ENCODE measurements at regions of chr17 and their contacts with region 1.

Region 1: DNA sequence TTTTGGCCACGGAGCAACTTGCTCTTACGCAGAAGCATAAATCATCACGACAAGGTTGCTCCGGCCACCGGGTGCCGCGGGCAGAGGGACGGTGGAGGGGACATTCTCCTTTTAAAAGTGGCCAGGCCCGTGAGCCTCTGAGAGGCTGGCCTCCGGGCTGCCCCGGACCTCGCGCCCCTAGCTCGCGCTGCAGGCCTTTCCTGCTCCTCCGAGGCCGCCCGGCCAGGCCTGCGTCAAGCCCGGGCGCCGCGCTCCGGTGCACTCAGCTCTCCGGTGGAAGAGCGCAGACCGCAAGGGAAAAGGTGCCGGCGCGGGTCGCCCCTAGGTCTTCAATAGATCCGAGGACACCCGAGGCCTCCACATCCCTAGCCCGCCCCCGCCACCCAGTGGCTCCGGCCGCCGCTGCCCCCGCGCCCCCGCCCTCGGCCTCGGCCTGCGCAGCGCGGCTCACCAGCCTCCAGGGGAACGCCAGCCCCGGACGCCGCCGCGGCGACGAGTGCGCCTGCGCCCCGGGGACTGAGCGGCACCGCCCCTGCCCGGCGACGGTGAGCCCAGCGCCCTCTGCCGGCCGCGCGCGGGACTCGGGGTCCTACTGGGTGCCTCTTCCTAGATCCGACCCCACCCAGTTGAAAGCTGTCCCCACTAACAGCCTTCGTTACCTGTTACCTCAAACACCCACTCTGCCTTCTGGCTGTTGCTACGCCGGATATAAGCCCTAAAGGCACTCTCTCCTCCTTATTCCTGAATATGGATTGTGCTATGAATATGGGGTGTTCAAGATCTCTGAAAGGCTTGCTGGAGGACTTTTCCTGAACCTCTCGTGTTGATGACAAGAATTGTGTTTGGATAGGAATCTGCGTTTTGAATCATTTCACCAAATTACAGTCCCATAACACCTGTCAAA is at the start of gene LYRM9:
- DNase-seq: peak; percentile 94
- ATAC-seq: peak; percentile 99
- H3K4me3 Mint-ChIP-seq: peak within 1 kb of the TSS; percentile 75
- H3K27ac Mint-ChIP-seq: no peak within 1 kb of the TSS
- H3K4me1 Mint-ChIP-seq: peaks cover 20% of the 10 kb centered on the region
- H3K27me3 Mint-ChIP-seq: peaks cover 15% of the 10 kb centered on the region
- CTCF ChIP-seq: peak; percentile 96
- total RNA-seq, gene LYRM9: 3.1 to 3.5 TPM

Region 2: GRCh38 chr17:27552469-27552779 is 340.7 kb before region 1 on chr17:
- CTCF ChIA-PET with region 1: no interaction called
- POLR2A ChIA-PET with region 1: no interaction called
- intact Hi-C with region 1: no loop called
- DNase-seq: peak; percentile 42
- ATAC-seq: peak; percentile 76
- H3K4me3 Mint-ChIP-seq: no peak overlapping the region
- H3K27ac Mint-ChIP-seq: no peak overlapping the region
- H3K4me1 Mint-ChIP-seq: peaks cover 25% of the 10 kb centered on the region
- H3K27me3 Mint-ChIP-seq: no peaks in the 10 kb centered on the region
- CTCF ChIP-seq: no peak

Region 3: GRCh38 chr17:27760069-27760885 is 132.8 kb before region 1 on chr17:
- CTCF ChIA-PET with region 1: interaction called, 11 read pairs
- POLR2A ChIA-PET with region 1: no interaction called
- intact Hi-C with region 1: no loop called
- DNase-seq: peak; percentile 82
- ATAC-seq: peak; percentile 68
- H3K4me3 Mint-ChIP-seq: no peak overlapping the region
- H3K27ac Mint-ChIP-seq: no peak overlapping the region
- H3K4me1 Mint-ChIP-seq: no peaks in the 10 kb centered on the region
- H3K27me3 Mint-ChIP-seq: no peaks in the 10 kb centered on the region
- CTCF ChIP-seq: peak; percentile 94

Region 4: GRCh38 chr17:27793168-27793905 is 99.8 kb before region 1 on chr17:
- CTCF ChIA-PET with region 1: interaction called, 14 read pairs
- POLR2A ChIA-PET with region 1: no interaction called
- intact Hi-C with region 1: no loop called
- DNase-seq: no peak
- ATAC-seq: peak; percentile 47
- H3K4me3 Mint-ChIP-seq: no peak overlapping the region
- H3K27ac Mint-ChIP-seq: no peak overlapping the region
- H3K4me1 Mint-ChIP-seq: peaks cover 4% of the 10 kb centered on the region
- H3K27me3 Mint-ChIP-seq: peaks cover 29% of the 10 kb centered on the region
- CTCF ChIP-seq: no peak

Region 5: DNA sequence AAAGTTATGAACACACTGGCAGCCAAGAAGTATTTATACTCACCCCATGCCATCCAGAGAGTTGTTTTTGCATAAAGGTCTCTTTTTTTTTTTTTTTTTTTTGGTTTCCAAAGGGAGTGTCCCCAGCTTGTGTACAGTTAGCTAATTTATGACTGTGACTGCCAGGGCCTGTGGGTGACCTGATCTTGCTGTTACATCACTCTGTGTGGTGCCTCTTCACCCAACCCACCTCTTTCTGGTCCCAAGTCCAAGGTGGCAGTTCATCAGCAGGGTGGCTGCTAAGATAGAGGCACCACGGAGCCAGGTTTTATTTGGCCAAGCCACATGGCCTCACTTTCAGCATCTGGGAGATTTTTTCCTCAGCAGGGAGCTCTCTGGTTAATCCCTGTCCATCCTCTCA is 92.6 kb before region 1 on chr17 and contains the start of gene NOS2:
- CTCF ChIA-PET with region 1: interaction called, 113 read pairs
- POLR2A ChIA-PET with region 1: interaction called, 4 read pairs
- intact Hi-C with region 1: loop called (anchors 5 kb)
- DNase-seq: no peak
- ATAC-seq: no peak
- H3K4me3 Mint-ChIP-seq: no peak within 1 kb of the TSS
- H3K27ac Mint-ChIP-seq: no peak within 1 kb of the TSS
- H3K4me1 Mint-ChIP-seq: peaks cover 3% of the 10 kb centered on the region
- H3K27me3 Mint-ChIP-seq: peaks cover 10% of the 10 kb centered on the region
- CTCF ChIP-seq: no peak
- total RNA-seq, gene NOS2: not detected

Region 6: DNA sequence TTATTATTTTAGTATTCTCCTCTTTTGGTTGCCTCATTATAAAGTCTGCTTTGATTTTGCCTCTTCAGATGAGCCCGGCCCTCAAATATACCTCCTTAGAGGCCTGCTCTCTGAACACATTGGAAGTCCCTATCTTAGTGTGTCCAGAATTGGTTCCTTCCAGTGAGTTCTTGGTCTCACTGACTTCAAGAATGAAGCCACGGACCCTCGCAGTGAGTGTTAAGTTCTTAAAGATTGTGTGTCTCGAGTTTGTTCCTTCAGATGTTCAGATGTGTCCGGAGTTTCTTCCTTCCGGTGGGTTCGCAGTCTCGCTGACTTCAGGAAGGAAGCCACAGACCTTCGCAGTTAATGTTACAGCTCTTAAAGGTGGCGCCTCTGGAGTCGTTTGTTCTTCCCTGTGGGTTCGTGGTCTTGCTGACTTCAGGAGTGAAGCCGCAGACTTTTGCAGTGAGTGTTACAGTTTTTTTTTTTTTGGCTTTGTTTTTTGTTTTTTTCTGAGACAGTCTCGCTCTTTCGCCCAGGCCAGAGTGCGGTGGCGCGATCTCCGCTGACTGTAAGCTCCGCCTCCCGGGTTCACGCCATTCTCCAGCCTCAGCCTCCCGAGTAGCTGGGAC is 47.0 kb before region 1 on chr17:
- CTCF ChIA-PET with region 1: interaction called, 7 read pairs
- POLR2A ChIA-PET with region 1: no interaction called
- intact Hi-C with region 1: loop called (anchors 5 kb)
- DNase-seq: peak; percentile 48
- ATAC-seq: peak; percentile 79
- H3K4me3 Mint-ChIP-seq: peak overlapping the region; percentile 63
- H3K27ac Mint-ChIP-seq: peak overlapping the region; percentile 84
- H3K4me1 Mint-ChIP-seq: peaks cover 20% of the 10 kb centered on the region
- H3K27me3 Mint-ChIP-seq: no peaks in the 10 kb centered on the region
- CTCF ChIP-seq: no peak

Region 7: DNA sequence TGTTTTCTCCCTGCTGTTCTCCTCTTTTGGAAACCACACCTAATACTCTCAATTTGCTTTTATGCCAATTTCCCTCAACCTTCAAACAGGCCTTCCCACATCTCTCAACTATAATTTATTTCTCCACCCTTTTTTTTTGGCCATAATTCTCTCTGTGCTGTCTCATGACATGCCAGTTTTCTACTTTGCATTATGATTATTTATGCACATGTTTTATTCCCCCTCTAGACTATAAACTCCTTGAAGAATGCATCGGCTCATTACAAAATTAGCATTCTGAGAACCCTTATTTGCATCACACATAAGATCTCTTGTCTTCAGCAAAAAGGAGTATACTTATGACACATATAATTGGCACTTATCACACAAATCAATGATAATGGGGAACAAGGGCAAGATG is 11.0 kb after region 1 on chr17:
- CTCF ChIA-PET with region 1: interaction called, 13 read pairs
- POLR2A ChIA-PET with region 1: no interaction called
- intact Hi-C with region 1: no loop called
- DNase-seq: no peak
- ATAC-seq: no peak
- H3K4me3 Mint-ChIP-seq: no peak overlapping the region
- H3K27ac Mint-ChIP-seq: no peak overlapping the region
- H3K4me1 Mint-ChIP-seq: no peaks in the 10 kb centered on the region
- H3K27me3 Mint-ChIP-seq: peaks cover 12% of the 10 kb centered on the region
- CTCF ChIP-seq: no peak